ENCODE measurements at regions of chr15 and their contacts with region 1.

Region 1: GRCh38 chr15:89087830-89088604 is at the start of gene ABHD2:
- DNase-seq: peak; percentile 99
- ATAC-seq: peak; percentile 90
- total RNA-seq, gene ABHD2: 59.4 TPM

Region 2: GRCh38 chr15:89139400-89140166 is 51.6 kb after region 1 on chr15:
- intact Hi-C with region 1: loop called (anchors 5 kb)
- DNase-seq: peak; percentile 62
- ATAC-seq: peak; percentile 36

Region 3: GRCh38 chr15:89334510-89335288 is 246.7 kb after region 1 on chr15 and contains the start of gene POLG:
- intact Hi-C with region 1: loop called (anchors 5 kb)
- DNase-seq: peak; percentile 98
- ATAC-seq: peak; percentile 97
- total RNA-seq, gene POLG: 36.9 TPM